GM10248 (cell line): ENCODE measurements at regions of chr11 and their contacts with region 1.

Region 1: GRCh38 chr11:96267496-96268032 is 75.4 kb downstream of the MAML2 start:
- DNase-seq: peak; percentile 81
- CTCF ChIP-seq: no peak

Region 2: GRCh38 chr11:95977534-95978174 is 289.9 kb before region 1 on chr11:
- CTCF ChIA-PET with region 1: no interaction called
- POLR2A ChIA-PET with region 1: no interaction called
- DNase-seq: no peak
- CTCF ChIP-seq: no peak

Region 3: GRCh38 chr11:96001037-96001436 is 266.5 kb before region 1 on chr11:
- CTCF ChIA-PET with region 1: no interaction called
- POLR2A ChIA-PET with region 1: no interaction called
- DNase-seq: no peak
- CTCF ChIP-seq: no peak

Region 4: GRCh38 chr11:96279018-96279895 is 11.7 kb after region 1 on chr11:
- CTCF ChIA-PET with region 1: interaction called, 15 read pairs
- POLR2A ChIA-PET with region 1: no interaction called
- DNase-seq: no peak
- CTCF ChIP-seq: no peak

Region 5: GRCh38 chr11:96287822-96288439 is 20.4 kb after region 1 on chr11:
- CTCF ChIA-PET with region 1: interaction called, 10 read pairs
- POLR2A ChIA-PET with region 1: no interaction called
- DNase-seq: no peak
- CTCF ChIP-seq: no peak